Sciatic nerve (tissue), 2 donors: ENCODE measurements at regions of chr14 and their contacts with region 1.

Region 1: DNA sequence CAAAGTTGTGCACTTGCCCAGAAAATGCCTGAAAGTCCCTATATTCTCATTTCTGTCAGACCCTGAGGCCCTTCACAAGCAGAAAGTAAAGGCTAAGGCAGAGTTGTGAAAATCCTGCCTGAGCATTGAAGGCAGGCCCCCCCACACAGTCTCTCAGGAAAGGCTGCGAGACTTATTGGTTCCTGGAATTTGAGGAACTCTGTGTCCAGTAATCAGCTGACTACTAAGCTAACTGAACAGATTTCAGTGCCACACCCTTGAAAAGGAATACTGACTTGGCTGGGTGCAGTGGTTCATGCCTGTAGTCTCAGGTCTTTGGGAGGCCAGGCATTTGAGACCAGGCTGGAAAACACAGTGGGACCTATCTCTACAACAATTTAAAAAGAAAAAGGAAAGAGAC is 21.1 kb upstream of the PPP2R5E start:
- DNase-seq: no peak
- ATAC-seq: peak; percentile 62

Region 2: DNA sequence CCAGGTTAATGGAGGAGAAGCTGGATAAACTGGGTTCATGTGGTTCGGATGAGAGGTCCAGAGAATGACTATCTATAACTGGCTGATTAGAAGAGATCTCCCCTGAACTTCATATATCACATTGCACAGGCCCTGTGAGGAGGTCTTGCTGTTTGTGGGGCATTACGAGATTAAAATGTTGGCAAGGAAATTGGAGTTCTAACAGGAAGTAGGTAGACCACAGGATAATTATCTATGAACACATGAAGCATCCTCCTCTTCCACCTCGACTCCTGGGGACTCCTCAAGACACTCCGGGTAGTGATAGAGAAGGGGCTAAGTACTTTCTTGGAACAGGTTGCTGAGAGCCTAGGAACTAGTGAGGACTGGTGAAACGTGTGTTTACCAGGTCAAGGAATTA is 937.9 kb before region 1 on chr14:
- intact Hi-C with region 1: no loop called
- DNase-seq: no peak
- ATAC-seq: no peak

Region 3: GRCh38 chr14:62864588-62864987 is 699.7 kb before region 1 on chr14:
- intact Hi-C with region 1: no loop called
- DNase-seq: no peak
- ATAC-seq: no peak

Region 4: GRCh38 chr14:63543000-63543825 is 21.1 kb before region 1 on chr14 and contains the start of gene PPP2R5E:
- intact Hi-C with region 1: loop called (anchors 1 kb)
- DNase-seq: peak; percentile 99
- ATAC-seq: peak; percentile 100
- total RNA-seq, gene PPP2R5E: 37.6 TPM